K562 (cell line): ENCODE measurements at regions of chr10 and their contacts with region 1.

Region 1: GRCh38 chr10:68301790-68302502 is 29.9 kb upstream of the HNRNPH3 start:
- DNase-seq: peak; percentile 49 to 55 (median 50)
- ATAC-seq: peak; percentile 84
- H3K4me3 ChIP-seq: no peak overlapping the region
- H3K27ac ChIP-seq: no peak overlapping the region
- H3K4me1 ChIP-seq: no peaks in the 10 kb centered on the region
- H3K27me3 ChIP-seq: no peaks in the 10 kb centered on the region
- CTCF ChIP-seq: peak; percentile 40 to 84 (median 66); a peak in 5 of 6 replicates
- EP300 ChIP-seq: no peak
- POLR2A ChIP-seq: no peak
- RAD21 ChIP-seq: peak; percentile 68 to 81

Region 2: GRCh38 chr10:67779465-67780203 is 522.3 kb before region 1 on chr10:
- CTCF ChIA-PET with region 1: no interaction called
- POLR2A ChIA-PET with region 1: no interaction called
- in situ Hi-C with region 1: loop called (anchors 10 kb)
- intact Hi-C with region 1: no loop called
- DNase-seq: peak; percentile 72 to 89 (median 75)
- ATAC-seq: peak; percentile 87
- H3K4me3 ChIP-seq: no peak overlapping the region
- H3K27ac ChIP-seq: no peak overlapping the region
- H3K4me1 ChIP-seq: no peaks in the 10 kb centered on the region
- H3K27me3 ChIP-seq: no peaks in the 10 kb centered on the region; a peak in 1 of 5 replicates
- CTCF ChIP-seq: peak; percentile 78 to 96 (median 87)
- EP300 ChIP-seq: no peak
- POLR2A ChIP-seq: no peak
- RAD21 ChIP-seq: peak; percentile 96

Region 3: DNA sequence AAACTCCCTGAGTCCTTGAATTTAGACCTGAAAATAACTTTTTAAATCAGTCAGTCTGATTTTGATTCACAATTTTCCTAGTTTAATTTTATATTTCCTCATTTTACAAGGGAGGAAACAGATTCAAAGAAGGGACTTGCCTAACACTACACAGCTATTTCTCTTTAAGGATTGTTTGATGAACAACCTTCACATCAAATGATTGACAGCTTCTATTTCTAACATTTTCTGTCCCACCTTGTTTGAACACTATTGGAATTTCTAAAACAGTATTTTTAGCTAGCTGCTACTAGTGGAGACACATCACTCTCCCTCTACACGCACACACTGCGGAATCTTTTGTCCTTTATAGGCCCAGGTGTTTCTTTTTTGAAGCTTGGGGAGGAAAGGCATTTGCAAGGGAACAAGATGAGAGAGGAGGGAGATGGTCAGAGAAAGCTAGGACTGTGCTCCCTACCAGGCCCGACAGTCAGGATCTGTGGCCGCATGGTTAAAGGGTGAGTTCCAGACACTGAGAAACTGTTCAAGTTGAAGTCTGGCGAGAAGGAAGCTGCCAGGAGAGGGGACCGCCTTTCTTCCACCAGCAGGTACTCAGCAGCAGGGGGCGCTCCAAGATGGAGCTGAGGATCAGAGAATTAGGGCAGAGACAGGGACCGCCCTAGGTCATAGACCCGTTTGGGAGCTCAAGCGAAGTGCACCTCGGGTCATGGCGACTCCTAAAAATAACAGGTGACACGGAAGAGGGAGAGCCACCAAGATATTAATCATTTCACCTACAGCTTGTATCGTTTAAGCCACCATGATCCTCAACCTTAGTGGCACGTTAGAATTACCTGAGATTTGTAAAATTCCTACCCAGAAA is 513.7 kb before region 1 on chr10:
- CTCF ChIA-PET with region 1: interaction called, 3 read pairs
- POLR2A ChIA-PET with region 1: no interaction called
- in situ Hi-C with region 1: loop called (anchors 10 kb)
- intact Hi-C with region 1: loop called (anchors 1 kb)
- DNase-seq: peak; percentile 84 to 90 (median 88)
- ATAC-seq: peak; percentile 89
- H3K4me3 ChIP-seq: no peak overlapping the region
- H3K27ac ChIP-seq: no peak overlapping the region
- H3K4me1 ChIP-seq: peaks cover 0 to 14% of the 10 kb centered on the region in 2 experiments; a peak in 4 of 5 replicates
- H3K27me3 ChIP-seq: no peaks in the 10 kb centered on the region
- CTCF ChIP-seq: peak; percentile 87 to 95 (median 94)
- EP300 ChIP-seq: no peak
- POLR2A ChIP-seq: no peak
- RAD21 ChIP-seq: peak; percentile 95 to 98

Region 4: GRCh38 chr10:67849331-67850011 is 452.5 kb before region 1 on chr10:
- CTCF ChIA-PET with region 1: interaction called, 3 read pairs
- POLR2A ChIA-PET with region 1: no interaction called
- in situ Hi-C with region 1: loop called (anchors 10 kb)
- intact Hi-C with region 1: no loop called
- DNase-seq: peak; percentile 92 to 99 (median 94)
- ATAC-seq: peak; percentile 99
- H3K4me3 ChIP-seq: peak overlapping the region; percentile 52
- H3K27ac ChIP-seq: peak overlapping the region; percentile 90
- H3K4me1 ChIP-seq: peaks cover 7 to 8% of the 10 kb centered on the region in 2 experiments; a peak in 4 of 5 replicates
- H3K27me3 ChIP-seq: no peaks in the 10 kb centered on the region
- CTCF ChIP-seq: peak in 1 of 3 experiments; percentile 41; a peak in 2 of 6 replicates
- EP300 ChIP-seq: no peak
- POLR2A ChIP-seq: peak; percentile 91
- RAD21 ChIP-seq: peak in 1 of 2 experiments; percentile 5; a peak in 1 of 4 replicates

Region 5: GRCh38 chr10:68163735-68164134 is 138.2 kb before region 1 on chr10:
- CTCF ChIA-PET with region 1: no interaction called
- POLR2A ChIA-PET with region 1: no interaction called
- in situ Hi-C with region 1: no loop called
- intact Hi-C with region 1: loop called (anchors 5 kb)
- DNase-seq: no peak
- ATAC-seq: no peak
- H3K4me3 ChIP-seq: no peak overlapping the region
- H3K27ac ChIP-seq: no peak overlapping the region
- H3K4me1 ChIP-seq: no peaks in the 10 kb centered on the region
- H3K27me3 ChIP-seq: peaks cover 14 to 19% of the 10 kb centered on the region in 2 experiments
- CTCF ChIP-seq: no peak
- EP300 ChIP-seq: no peak
- POLR2A ChIP-seq: no peak
- RAD21 ChIP-seq: no peak

Region 6: DNA sequence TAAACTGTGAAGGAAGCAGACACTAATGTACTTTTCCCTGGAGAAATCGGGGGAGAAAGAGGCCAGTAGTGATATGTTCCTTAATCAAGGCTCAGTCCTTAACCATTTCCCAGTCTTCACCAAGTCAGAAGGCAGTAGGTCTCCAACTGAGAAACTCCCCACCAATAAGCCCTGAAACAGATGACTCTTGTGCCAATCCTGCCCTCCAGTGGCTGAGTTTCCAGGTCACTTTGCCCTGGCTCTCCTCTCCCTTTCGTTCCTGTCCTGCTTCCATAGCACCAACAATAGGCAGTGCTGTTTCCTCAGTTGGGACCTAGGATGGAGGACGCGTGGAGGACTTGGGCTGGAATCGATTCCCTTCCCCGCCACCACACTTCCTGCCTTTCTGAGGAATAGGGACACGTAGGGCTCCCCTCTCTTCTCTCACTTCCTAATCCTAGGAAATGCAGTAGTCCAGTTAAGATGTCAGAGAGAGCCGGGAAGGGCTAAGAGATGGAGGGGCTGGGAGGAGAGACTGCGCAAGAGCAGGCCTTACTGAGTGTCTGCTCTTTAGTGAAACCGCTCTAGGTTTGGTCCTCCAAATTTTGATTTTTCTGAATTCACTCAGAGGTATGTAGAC is 93.4 kb before region 1 on chr10:
- CTCF ChIA-PET with region 1: interaction called, 4 read pairs
- POLR2A ChIA-PET with region 1: interaction called, 3 read pairs
- in situ Hi-C with region 1: loop called (anchors 5 kb)
- intact Hi-C with region 1: loop called (anchors 1 kb)
- DNase-seq: peak in 3 of 4 experiments; percentile 25 to 62 (median 46)
- ATAC-seq: peak; percentile 84
- H3K4me3 ChIP-seq: no peak overlapping the region
- H3K27ac ChIP-seq: no peak overlapping the region
- H3K4me1 ChIP-seq: no peaks in the 10 kb centered on the region
- H3K27me3 ChIP-seq: peaks cover 30 to 32% of the 10 kb centered on the region in 2 experiments
- CTCF ChIP-seq: peak; percentile 67 to 73 (median 70)
- EP300 ChIP-seq: no peak
- POLR2A ChIP-seq: no peak
- RAD21 ChIP-seq: peak; percentile 56 to 83